Cardiac septum (tissue), 1 donor: ENCODE measurements at regions of chr1 and their contacts with region 1.

Region 1: GRCh38 chr1:22052115-22053016 is at the start of gene CDC42:
- DNase-seq: peak; percentile 99
- total RNA-seq, gene CDC42: 164 TPM

Region 2: DNA sequence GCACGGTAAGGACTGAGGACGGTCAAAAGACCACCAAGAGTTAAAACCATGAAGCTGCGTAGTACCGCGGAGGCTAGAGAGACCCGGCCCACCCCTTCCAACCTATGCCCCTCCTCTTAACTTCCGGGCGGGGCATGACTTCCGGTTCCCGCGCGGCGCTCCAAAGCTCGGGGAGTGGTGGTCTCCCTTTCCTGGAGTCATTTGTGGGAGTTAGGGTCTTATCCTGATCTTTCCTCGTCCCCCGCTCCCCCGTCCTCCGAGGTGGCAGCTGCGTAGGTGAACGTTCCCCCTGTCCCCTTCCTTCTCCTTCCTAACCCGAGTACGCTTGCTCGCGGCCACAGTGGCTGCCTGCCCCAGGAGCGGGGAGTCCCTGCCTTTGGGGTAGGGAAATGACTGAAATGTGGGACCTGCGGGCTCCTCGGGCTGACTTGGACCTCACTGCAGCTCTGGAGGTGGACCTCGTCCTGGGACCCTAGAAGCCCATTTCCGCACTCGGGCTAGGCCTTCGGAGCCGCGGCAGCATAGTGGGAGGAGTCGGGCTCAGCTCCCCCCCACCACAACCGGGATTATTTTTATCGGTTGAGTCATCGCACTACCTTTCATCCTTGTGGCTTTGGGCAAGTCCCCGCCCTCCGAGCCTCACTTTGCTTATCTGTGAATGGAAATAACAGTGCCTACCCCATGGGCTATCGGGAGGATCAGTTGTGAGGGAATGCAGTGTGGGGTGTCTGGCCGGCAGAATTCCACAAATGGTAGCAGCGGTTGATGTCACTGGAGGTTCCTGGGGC is 26.8 kb before region 1 on chr1:
- intact Hi-C with region 1: loop called (anchors 1 kb)
- DNase-seq: peak; percentile 94

Region 3: DNA sequence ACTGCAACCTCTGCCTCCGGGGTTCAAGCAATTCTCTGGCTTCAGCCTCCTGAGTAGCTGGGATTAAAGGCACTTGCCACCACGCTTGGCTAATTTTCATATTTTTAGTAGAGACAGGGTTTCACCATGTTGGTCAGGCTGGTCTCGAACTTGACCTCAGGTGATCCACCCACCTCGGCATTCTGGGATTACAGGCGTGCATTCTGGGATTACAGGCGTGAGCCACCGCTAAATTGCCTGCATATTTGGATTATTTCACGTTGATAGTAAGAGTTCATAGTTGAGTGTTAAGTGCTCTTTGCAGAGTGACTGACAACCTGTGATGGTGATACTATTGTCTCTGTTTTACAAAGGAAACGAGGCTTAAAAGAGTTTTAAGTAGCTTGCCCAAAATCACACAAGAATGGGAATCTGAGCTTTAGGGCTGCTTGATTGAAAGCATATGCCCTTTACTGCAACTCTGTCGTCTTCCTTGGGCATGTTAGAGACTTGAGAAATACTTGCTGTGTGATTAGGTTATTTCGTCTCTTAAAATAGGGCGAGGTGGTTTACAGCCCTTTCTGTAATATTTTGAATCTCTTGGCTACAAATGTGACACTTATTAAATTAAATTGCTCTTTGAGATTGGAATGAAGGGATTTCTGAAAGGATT is 12.5 kb after region 1 on chr1:
- intact Hi-C with region 1: no loop called
- DNase-seq: no peak

Region 4: DNA sequence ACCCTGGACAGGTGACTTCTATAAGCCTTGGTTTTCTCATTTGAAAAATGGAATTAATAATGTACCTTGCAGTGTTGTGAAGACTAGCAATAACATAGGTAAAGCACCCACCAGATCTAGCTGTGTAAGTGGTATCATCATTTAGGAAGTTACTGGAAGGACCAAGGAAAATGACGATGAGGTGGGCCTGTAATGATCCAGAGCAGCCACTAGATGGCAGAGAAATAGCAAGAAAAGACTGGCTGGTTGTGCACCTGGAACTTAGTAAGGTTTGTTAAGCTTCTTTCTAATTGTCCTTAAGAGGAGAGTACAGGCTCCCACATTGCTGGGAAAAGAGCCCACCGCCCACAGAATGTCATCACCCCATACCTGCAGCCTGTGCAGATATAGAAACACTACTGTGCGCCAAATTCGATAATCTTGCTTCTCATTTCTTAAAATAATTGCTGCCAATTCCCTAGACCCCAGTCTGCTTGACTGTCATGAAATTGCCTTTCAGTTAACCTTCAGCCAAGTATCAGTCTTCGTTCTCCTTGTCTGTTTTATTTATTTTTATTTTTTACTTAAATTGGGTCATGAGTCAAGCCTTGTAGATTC is 53.3 kb after region 1 on chr1:
- intact Hi-C with region 1: no loop called
- DNase-seq: no peak